Posterior cingulate gyrus (tissue), 11 donors: ENCODE measurements at regions of chr5 and their contacts with region 1.

Region 1: DNA sequence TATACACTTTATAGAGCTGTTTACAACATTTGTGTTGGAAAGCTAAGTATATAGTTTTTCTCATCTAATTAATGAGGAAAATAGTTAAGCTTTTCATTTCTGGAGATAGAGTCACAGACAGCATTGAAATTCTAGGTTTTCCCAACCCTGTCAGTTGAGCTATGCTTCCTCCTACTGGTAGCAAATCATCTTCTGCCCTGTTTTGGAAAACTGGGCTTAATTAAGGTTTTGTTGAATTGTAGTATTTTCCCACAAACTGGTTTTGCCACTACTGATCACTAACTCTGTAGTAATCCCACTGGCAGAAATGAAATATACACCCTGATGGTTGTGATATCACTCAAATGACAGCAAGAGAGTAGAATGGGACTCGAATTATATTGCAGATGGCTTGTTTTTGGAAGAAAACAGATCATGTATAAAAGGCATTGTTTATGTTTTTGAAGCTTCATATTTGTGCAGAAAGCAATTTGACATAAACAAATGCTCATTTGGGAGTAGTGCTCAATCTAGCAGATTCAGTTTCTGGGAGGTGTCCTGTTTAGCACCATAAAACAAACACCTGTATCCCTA is 46.6 kb downstream of the CD180 start:
- DNase-seq: no peak

Region 2: DNA sequence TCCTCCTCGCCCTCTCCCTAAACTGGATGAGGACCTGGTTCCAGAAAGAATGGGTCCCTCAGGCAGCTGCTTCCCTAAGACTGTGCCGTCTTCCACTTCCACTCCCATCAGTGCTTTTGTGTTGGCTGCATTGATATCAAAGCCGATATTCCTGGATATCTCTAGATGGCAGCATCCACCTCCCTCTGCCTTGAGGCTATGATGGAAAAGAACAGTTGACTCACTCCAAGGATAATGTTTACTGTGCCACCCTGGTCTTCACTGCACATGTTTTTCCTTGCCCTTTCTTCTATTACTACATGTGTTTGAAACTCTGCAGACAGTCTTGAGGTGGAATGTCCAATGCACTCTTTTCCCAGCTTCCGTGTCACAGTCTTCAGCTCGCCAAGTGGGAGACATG is 342.3 kb before region 1 on chr5:
- intact Hi-C with region 1: loop called (anchors 5 kb)
- DNase-seq: peak in 3 of 10 donors; percentile 31 to 87 (median 35)

Region 3: DNA sequence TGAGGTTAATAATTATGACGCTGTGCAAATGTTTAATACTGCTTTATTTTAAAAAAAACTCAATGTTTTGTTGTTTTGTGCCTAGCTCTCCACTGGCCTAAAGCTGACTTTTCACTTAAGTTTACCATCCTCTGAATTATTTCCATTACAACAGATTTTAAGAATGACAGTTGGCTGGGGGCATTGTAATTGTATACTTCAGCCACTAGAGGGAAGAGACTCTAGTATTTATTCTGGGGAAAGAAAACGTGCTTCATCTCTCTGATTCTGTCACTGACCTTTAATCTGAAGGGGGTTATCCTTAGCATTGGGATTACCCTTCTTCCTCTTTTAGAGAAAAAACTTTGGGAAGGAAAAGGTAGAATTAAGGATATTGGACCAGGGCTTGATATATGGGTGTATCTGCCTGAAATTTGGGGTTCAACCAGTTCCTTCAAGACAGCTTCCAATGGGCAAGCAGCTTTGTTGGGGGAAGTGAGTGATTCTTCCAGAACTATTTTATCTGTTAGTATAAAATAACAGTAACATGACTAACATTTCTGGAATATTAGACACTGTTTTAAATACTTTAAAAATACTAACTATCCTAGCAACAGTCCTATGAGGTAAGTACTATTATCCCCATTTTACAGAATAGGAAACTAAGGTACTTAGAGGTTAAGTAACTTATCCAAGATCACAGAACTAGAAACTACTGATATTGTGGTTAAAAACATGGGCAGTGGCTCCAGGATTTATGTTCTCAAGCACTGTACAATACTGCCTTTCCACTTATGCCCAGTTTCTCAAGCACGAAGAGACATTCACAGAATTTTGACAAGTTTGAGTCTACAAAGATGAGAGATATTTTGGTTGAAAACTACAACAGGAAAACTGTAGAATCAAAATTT is 161.8 kb before region 1 on chr5:
- intact Hi-C with region 1: loop called (anchors 5 kb)
- DNase-seq: no peak

Region 4: GRCh38 chr5:67494186-67494855 is 344.3 kb after region 1 on chr5:
- intact Hi-C with region 1: no loop called
- DNase-seq: peak in 7 of 10 donors; percentile 5 to 85 (median 46)